Thyroid gland (tissue), 4 donors: ENCODE measurements at regions of chr4 and their contacts with region 1.

Region 1: DNA sequence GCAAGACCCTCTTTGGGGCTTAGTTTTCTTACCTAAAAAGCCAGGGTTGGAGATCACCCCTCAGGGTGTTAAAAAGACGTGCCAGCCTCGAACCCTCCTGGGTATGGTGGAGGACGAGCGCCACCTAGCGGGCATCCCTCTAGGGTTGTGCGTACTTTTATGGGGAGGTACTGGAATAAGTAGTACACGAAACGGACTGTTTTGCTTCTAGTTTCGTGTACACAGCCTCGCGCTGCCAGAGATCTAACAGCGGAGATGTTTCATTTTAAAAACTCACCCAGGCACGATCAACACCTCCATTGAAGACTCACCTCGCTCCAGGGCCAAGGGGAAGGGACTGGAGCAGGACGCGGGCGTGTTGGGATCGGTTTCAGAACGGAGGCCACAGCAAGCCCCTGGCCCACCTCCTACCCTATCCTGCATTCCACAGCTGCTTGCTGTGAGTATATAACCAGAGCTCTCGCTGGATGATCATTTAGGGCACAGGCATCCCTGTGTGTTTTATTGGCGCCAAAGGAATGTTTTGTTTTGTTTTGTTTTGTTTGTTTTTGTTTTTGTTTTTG is 4.8 kb upstream of the NKX3-2 start:
- DNase-seq: peak; percentile 69 to 76
- H3K4me3 ChIP-seq: no peak overlapping the region
- H3K27ac ChIP-seq: no peak overlapping the region
- H3K4me1 ChIP-seq: peaks cover 17 to 33% of the 10 kb centered on the region in 2 donors
- H3K27me3 ChIP-seq: peaks cover 39% of the 10 kb centered on the region
- CTCF ChIP-seq: peak; percentile 61 to 88 (median 82)
- POLR2A ChIP-seq: no peak

Region 2: GRCh38 chr4:12734586-12734985 is 814.5 kb before region 1 on chr4:
- intact Hi-C with region 1: loop called (anchors 10 kb)
- DNase-seq: no peak
- H3K4me3 ChIP-seq: no peak overlapping the region
- H3K27ac ChIP-seq: no peak overlapping the region
- H3K4me1 ChIP-seq: no peaks in the 10 kb centered on the region
- H3K27me3 ChIP-seq: no peaks in the 10 kb centered on the region
- CTCF ChIP-seq: no peak
- POLR2A ChIP-seq: no peak

Region 3: GRCh38 chr4:12852338-12853307 is 696.4 kb before region 1 on chr4:
- intact Hi-C with region 1: loop called (anchors 5 kb)
- DNase-seq: peak; percentile 1 to 3
- H3K4me3 ChIP-seq: no peak overlapping the region
- H3K27ac ChIP-seq: no peak overlapping the region
- H3K4me1 ChIP-seq: no peaks in the 10 kb centered on the region
- H3K27me3 ChIP-seq: no peaks in the 10 kb centered on the region
- CTCF ChIP-seq: peak; percentile 29 to 86 (median 51)
- POLR2A ChIP-seq: no peak

Region 4: GRCh38 chr4:13143222-13144070 is 405.6 kb before region 1 on chr4:
- intact Hi-C with region 1: no loop called
- DNase-seq: no peak
- H3K4me3 ChIP-seq: no peak overlapping the region
- H3K27ac ChIP-seq: no peak overlapping the region
- H3K4me1 ChIP-seq: no peaks in the 10 kb centered on the region
- H3K27me3 ChIP-seq: no peaks in the 10 kb centered on the region
- CTCF ChIP-seq: no peak
- POLR2A ChIP-seq: no peak